Ovary (tissue), 10 donors: ENCODE measurements at regions of chr6 and their contacts with region 1.

Region 1: GRCh38 chr6:106426250-106426970 is 65.9 kb downstream of the CRYBG1 start:
- DNase-seq: no peak
- H3K4me3 ChIP-seq: no peak overlapping the region
- H3K27ac ChIP-seq: no peak overlapping the region
- H3K4me1 ChIP-seq: no peaks in the 10 kb centered on the region
- H3K27me3 ChIP-seq: no peaks in the 10 kb centered on the region
- CTCF ChIP-seq: no peak
- EP300 ChIP-seq: no peak
- POLR2A ChIP-seq: no peak

Region 2: DNA sequence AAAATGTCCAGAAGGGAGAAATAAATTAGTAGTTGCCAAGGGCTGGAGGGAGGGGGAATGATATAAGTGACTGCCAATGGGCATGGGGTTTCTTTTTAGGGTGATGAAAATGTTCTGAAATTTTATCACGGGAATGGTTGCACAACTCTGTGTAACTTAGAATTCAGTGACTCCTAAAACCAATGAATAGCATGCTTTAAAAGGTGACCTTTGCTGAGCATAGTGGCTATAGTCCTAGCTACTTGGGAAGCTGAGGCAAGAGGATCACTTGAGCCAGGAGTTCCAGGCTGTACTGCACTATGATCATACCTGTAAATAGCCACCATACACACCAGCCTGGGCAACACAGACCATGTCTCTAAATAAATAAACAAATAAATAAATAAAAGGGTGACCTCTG is 209.9 kb before region 1 on chr6:
- intact Hi-C with region 1: no loop called
- DNase-seq: no peak
- H3K4me3 ChIP-seq: no peak overlapping the region
- H3K27ac ChIP-seq: no peak overlapping the region
- H3K4me1 ChIP-seq: peaks cover 1% of the 10 kb centered on the region
- H3K27me3 ChIP-seq: no peaks in the 10 kb centered on the region
- CTCF ChIP-seq: no peak
- EP300 ChIP-seq: no peak
- POLR2A ChIP-seq: no peak

Region 3: GRCh38 chr6:106360989-106361430 is 65.4 kb before region 1 on chr6:
- intact Hi-C with region 1: loop called in 1 of 4 experiments (anchors 2 kb)
- DNase-seq: peak in 1 of 5 donors; percentile 15
- H3K4me3 ChIP-seq: peak overlapping the region; percentile 37
- H3K27ac ChIP-seq: no peak overlapping the region
- H3K4me1 ChIP-seq: peaks cover 5% of the 10 kb centered on the region
- H3K27me3 ChIP-seq: no peaks in the 10 kb centered on the region
- CTCF ChIP-seq: no peak
- EP300 ChIP-seq: no peak
- POLR2A ChIP-seq: no peak

Region 4: GRCh38 chr6:106556368-106556960 is 130.1 kb after region 1 on chr6:
- intact Hi-C with region 1: no loop called
- DNase-seq: no peak
- H3K4me3 ChIP-seq: no peak overlapping the region
- H3K27ac ChIP-seq: no peak overlapping the region
- H3K4me1 ChIP-seq: no peaks in the 10 kb centered on the region
- H3K27me3 ChIP-seq: no peaks in the 10 kb centered on the region
- CTCF ChIP-seq: no peak
- EP300 ChIP-seq: no peak
- POLR2A ChIP-seq: no peak